ENCODE measurements at regions of chr11 and their contacts with region 1.

Region 1: GRCh38 chr11:12963792-12964536 is 45.2 kb upstream of the RASSF10 start:
- DNase-seq: peak; percentile 88
- H3K4me3 ChIP-seq: no peak overlapping the region
- H3K27ac ChIP-seq: no peak overlapping the region
- H3K4me1 ChIP-seq: no peaks in the 10 kb centered on the region; a peak in 1 of 4 replicates
- H3K27me3 ChIP-seq: no peaks in the 10 kb centered on the region
- CTCF ChIP-seq: peak; percentile 93
- EP300 ChIP-seq: no peak
- RAD21 ChIP-seq: peak; percentile 91

Region 2: GRCh38 chr11:12853652-12854296 is 110.2 kb before region 1 on chr11:
- CTCF ChIA-PET with region 1: no interaction called
- POLR2A ChIA-PET with region 1: no interaction called
- DNase-seq: no peak
- H3K4me3 ChIP-seq: no peak overlapping the region
- H3K27ac ChIP-seq: no peak overlapping the region; a peak in 1 of 4 replicates
- H3K4me1 ChIP-seq: peaks cover 4 to 10% of the 10 kb centered on the region in 2 experiments; a peak in 2 of 4 replicates
- H3K27me3 ChIP-seq: no peaks in the 10 kb centered on the region
- CTCF ChIP-seq: no peak
- EP300 ChIP-seq: no peak
- RAD21 ChIP-seq: no peak

Region 3: GRCh38 chr11:12979928-12980689 is 16.1 kb after region 1 on chr11:
- CTCF ChIA-PET with region 1: interaction called, 29 read pairs
- POLR2A ChIA-PET with region 1: no interaction called
- DNase-seq: no peak
- H3K4me3 ChIP-seq: no peak overlapping the region
- H3K27ac ChIP-seq: no peak overlapping the region
- H3K4me1 ChIP-seq: no peaks in the 10 kb centered on the region
- H3K27me3 ChIP-seq: peaks cover 10% of the 10 kb centered on the region; the same call in 1 of the 2 replicates
- CTCF ChIP-seq: no peak
- EP300 ChIP-seq: no peak
- RAD21 ChIP-seq: no peak

Region 4: DNA sequence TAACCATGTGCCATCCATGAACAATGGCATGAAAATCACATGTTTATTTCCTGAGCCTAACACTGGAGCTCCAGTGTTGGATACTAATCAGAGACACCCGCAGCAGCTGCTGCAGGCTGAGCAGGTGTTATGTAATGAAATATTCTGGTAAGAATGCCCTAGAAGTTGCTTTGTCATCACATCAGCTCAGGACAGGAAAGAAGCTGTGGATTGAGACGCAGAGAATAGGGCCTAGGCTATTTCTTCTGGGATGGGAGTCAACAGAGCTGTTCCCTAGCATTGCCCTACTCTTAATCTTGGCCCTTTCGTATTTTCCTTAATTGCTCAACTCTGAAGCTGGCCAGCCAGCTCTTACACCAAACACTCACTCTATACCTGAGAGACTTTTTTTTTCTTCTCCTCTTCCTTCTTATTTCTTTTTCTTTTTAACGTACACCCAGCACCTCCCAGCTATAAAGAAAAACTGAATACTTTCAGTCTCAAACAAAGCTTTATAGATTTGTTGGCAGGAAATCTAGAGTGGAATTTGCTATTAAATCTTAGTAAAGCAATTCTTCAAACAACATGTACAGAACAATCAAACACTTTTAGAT is 77.1 kb after region 1 on chr11:
- CTCF ChIA-PET with region 1: no interaction called
- POLR2A ChIA-PET with region 1: no interaction called
- DNase-seq: no peak
- H3K4me3 ChIP-seq: no peak overlapping the region
- H3K27ac ChIP-seq: no peak overlapping the region
- H3K4me1 ChIP-seq: no peaks in the 10 kb centered on the region
- H3K27me3 ChIP-seq: peaks cover 18% of the 10 kb centered on the region; the same call in 1 of the 2 replicates
- CTCF ChIP-seq: no peak
- EP300 ChIP-seq: no peak
- RAD21 ChIP-seq: no peak

Region 5: GRCh38 chr11:13152736-13153533 is 189.0 kb after region 1 on chr11:
- CTCF ChIA-PET with region 1: interaction called, 51 read pairs
- POLR2A ChIA-PET with region 1: no interaction called
- DNase-seq: no peak
- H3K4me3 ChIP-seq: no peak overlapping the region
- H3K27ac ChIP-seq: no peak overlapping the region
- H3K4me1 ChIP-seq: no peaks in the 10 kb centered on the region
- H3K27me3 ChIP-seq: no peaks in the 10 kb centered on the region; the same call in 1 of the 2 replicates
- CTCF ChIP-seq: peak; percentile 64
- EP300 ChIP-seq: no peak
- RAD21 ChIP-seq: peak; percentile 74

Region 6: DNA sequence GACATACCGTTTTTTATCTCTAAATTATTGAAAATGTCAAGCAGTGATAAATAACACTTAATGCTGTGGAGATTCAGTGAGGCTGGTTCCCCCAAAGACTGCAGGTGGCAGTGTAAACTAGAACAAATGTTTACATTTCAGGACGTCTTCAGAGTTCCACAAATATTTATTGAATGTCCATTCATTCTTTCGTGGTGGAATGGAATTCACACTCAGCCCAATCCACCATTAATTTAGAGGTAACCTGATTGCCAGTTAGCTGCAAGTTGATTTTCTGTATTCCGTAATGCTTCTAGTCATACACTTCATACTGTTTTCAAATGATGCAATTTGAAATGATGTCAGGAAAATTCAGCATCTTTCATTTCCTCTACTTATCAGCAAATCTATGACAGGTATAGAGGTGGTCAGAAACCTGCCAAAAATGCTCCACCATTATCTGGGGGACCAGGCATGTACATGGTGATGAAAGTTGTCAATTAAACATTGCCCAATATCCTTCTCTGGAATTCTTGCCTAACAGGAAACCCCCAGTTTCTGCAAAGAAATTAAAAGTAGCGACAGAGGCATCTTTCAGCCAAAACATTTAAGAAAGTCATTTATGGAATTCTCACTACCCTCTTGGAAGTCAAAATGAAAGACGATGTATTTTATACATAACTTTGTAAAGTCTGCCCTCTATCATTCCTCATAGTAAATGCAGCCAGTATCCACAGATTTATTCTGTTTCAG is 219.3 kb after region 1 on chr11:
- CTCF ChIA-PET with region 1: interaction called, 75 read pairs
- POLR2A ChIA-PET with region 1: no interaction called
- DNase-seq: peak; percentile 26
- H3K4me3 ChIP-seq: peak overlapping the region; percentile 40 to 52; a peak in 3 of 4 replicates
- H3K27ac ChIP-seq: no peak overlapping the region
- H3K4me1 ChIP-seq: no peaks in the 10 kb centered on the region; a peak in 1 of 4 replicates
- H3K27me3 ChIP-seq: no peaks in the 10 kb centered on the region
- CTCF ChIP-seq: peak; percentile 63
- EP300 ChIP-seq: no peak
- RAD21 ChIP-seq: peak; percentile 73

Measured in SK-N-SH (cell line).